ENCODE measurements at regions of chr1 and their contacts with region 1.

Region 1: GRCh38 chr1:182789138-182790076 is at the start of gene NPL:
- DNase-seq: peak; percentile 25
- ATAC-seq: peak; percentile 73
- H3K4me3 ChIP-seq: peak within 1 kb of the TSS; percentile 52
- H3K27ac ChIP-seq: no peak within 1 kb of the TSS
- H3K4me1 ChIP-seq: no peaks in the 10 kb centered on the region
- H3K27me3 ChIP-seq: peaks cover 54% of the 10 kb centered on the region
- CTCF ChIP-seq: no peak
- total RNA-seq, gene NPL: not detected in 2 replicates

Region 2: GRCh38 chr1:182430263-182431068 is 358.9 kb before region 1 on chr1:
- CTCF ChIA-PET with region 1: no interaction called
- POLR2A ChIA-PET with region 1: no interaction called
- intact Hi-C with region 1: no loop called
- DNase-seq: peak; percentile 2
- ATAC-seq: no peak
- H3K4me3 ChIP-seq: no peak overlapping the region
- H3K27ac ChIP-seq: no peak overlapping the region
- H3K4me1 ChIP-seq: no peaks in the 10 kb centered on the region
- H3K27me3 ChIP-seq: no peaks in the 10 kb centered on the region
- CTCF ChIP-seq: no peak

Region 3: DNA sequence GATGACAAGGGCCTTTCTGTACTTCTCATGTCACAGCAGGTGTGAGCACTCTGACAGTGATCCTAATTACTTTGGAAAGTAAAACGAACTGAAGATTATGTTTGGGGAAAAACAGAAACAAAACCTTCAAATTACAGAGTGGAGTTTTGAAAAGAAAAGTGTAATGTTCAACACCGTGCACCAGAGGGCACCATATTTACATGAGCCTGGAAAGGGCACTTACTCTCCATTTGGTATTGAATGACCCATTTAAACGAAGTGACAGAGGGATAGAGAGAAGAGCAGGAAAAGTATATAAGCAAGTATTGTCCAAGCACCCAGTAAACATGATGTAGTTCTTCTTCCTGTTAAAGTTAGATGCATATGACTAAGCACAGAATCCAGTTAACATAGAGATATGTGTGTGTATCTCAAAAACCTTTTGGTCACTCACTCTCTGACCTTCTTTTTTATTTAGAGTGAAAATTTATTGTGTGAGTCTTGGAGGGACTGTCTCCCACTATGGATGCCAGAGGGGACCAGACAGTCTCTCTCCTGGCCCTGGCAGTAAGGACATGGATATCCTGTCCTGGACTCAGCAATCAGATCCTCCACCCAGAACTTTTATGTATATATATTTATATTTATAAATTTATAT is 343.3 kb before region 1 on chr1:
- CTCF ChIA-PET with region 1: no interaction called
- POLR2A ChIA-PET with region 1: no interaction called
- intact Hi-C with region 1: loop called (anchors 1 kb)
- DNase-seq: peak; percentile 57
- ATAC-seq: peak; percentile 37
- H3K4me3 ChIP-seq: peak overlapping the region; percentile 19; the same call in 1 of the 2 replicates
- H3K27ac ChIP-seq: no peak overlapping the region
- H3K4me1 ChIP-seq: no peaks in the 10 kb centered on the region
- H3K27me3 ChIP-seq: 0 out of 2 replicates have a peak, but pooled peaks cover 7% of the 10 kb centered on the region
- CTCF ChIP-seq: peak; percentile 72

Region 4: GRCh38 chr1:182601416-182601786 is 188.0 kb before region 1 on chr1:
- CTCF ChIA-PET with region 1: interaction called, 12 read pairs
- POLR2A ChIA-PET with region 1: no interaction called
- intact Hi-C with region 1: loop called (anchors 1 kb)
- DNase-seq: peak; percentile 68
- ATAC-seq: peak; percentile 49
- H3K4me3 ChIP-seq: no peak overlapping the region
- H3K27ac ChIP-seq: no peak overlapping the region
- H3K4me1 ChIP-seq: peaks cover 7% of the 10 kb centered on the region
- H3K27me3 ChIP-seq: no peaks in the 10 kb centered on the region
- CTCF ChIP-seq: peak; percentile 75

Region 5: GRCh38 chr1:183195142-183195574 is 405.8 kb after region 1 on chr1:
- CTCF ChIA-PET with region 1: no interaction called
- POLR2A ChIA-PET with region 1: no interaction called
- intact Hi-C with region 1: no loop called
- DNase-seq: peak; percentile 38
- ATAC-seq: peak; percentile 63
- H3K4me3 ChIP-seq: no peak overlapping the region
- H3K27ac ChIP-seq: peak overlapping the region; percentile 36
- H3K4me1 ChIP-seq: peaks cover 17% of the 10 kb centered on the region
- H3K27me3 ChIP-seq: no peaks in the 10 kb centered on the region
- CTCF ChIP-seq: no peak